Stomach (tissue), 19 donors: ENCODE measurements at regions of chr20 and their contacts with region 1.

Region 1: GRCh38 chr20:5529331-5530148 is 212.8 kb upstream of the PROKR2 start:
- DNase-seq: peak; percentile 89 to 91
- H3K4me3 ChIP-seq: no peak overlapping the region
- H3K27ac ChIP-seq: peak overlapping the region in 1 of 5 donors; percentile 2
- H3K4me1 ChIP-seq: peaks cover 0 to 27% (median 17%) of the 10 kb centered on the region in 4 donors
- H3K27me3 ChIP-seq: no peaks in the 10 kb centered on the region
- CTCF ChIP-seq: peak in 5 of 7 experiments; percentile 45 to 69 (median 67)
- EP300 ChIP-seq: no peak
- POLR2A ChIP-seq: no peak

Region 2: GRCh38 chr20:5146871-5147592 is 382.5 kb before region 1 on chr20:
- intact Hi-C with region 1: no loop called
- DNase-seq: no peak
- H3K4me3 ChIP-seq: no peak overlapping the region
- H3K27ac ChIP-seq: no peak overlapping the region
- H3K4me1 ChIP-seq: peaks cover 36 to 93% (median 64%) of the 10 kb centered on the region in 4 donors
- H3K27me3 ChIP-seq: no peaks in the 10 kb centered on the region
- CTCF ChIP-seq: no peak
- EP300 ChIP-seq: no peak
- POLR2A ChIP-seq: no peak

Region 3: GRCh38 chr20:5788385-5788895 is 258.9 kb after region 1 on chr20:
- intact Hi-C with region 1: loop called (anchors 10 kb)
- DNase-seq: peak; percentile 80 to 94
- H3K4me3 ChIP-seq: no peak overlapping the region
- H3K27ac ChIP-seq: no peak overlapping the region
- H3K4me1 ChIP-seq: peaks cover 7 to 23% (median 20%) of the 10 kb centered on the region in 4 donors
- H3K27me3 ChIP-seq: no peaks in the 10 kb centered on the region
- CTCF ChIP-seq: peak in 5 of 7 experiments; percentile 58 to 89 (median 87)
- EP300 ChIP-seq: no peak
- POLR2A ChIP-seq: no peak

Region 4: DNA sequence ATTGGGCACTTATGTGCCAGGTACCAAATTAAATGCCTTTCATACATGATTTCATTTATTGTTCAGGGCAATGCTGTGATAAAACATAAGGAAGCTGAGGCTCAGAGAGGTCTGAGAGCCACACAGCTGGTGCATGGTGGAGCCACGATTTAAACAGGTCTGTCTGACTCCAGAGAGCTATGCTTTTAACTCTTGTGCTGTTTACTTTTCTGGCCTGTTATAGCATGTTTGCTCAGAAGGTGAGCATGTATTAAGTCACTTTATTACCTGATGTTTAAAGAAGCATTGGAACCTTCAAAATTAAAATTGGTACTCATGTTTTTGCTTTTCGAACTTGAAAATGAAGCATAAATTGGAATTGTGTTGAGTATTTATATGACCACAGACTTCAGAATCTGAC is 447.7 kb after region 1 on chr20:
- intact Hi-C with region 1: no loop called
- DNase-seq: no peak
- H3K4me3 ChIP-seq: no peak overlapping the region
- H3K27ac ChIP-seq: no peak overlapping the region
- H3K4me1 ChIP-seq: no peaks in the 10 kb centered on the region
- H3K27me3 ChIP-seq: no peaks in the 10 kb centered on the region
- CTCF ChIP-seq: no peak
- EP300 ChIP-seq: no peak
- POLR2A ChIP-seq: no peak

Region 5: GRCh38 chr20:6295127-6295866 is 765.8 kb after region 1 on chr20:
- intact Hi-C with region 1: no loop called
- DNase-seq: no peak
- H3K4me3 ChIP-seq: no peak overlapping the region
- H3K27ac ChIP-seq: no peak overlapping the region
- H3K4me1 ChIP-seq: peaks cover 0 to 6% (median 0%) of the 10 kb centered on the region in 4 donors
- H3K27me3 ChIP-seq: no peaks in the 10 kb centered on the region
- CTCF ChIP-seq: no peak
- EP300 ChIP-seq: no peak
- POLR2A ChIP-seq: no peak